GM12878 (cell line): ENCODE measurements at regions of chr9 and their contacts with region 1.

Region 1: DNA sequence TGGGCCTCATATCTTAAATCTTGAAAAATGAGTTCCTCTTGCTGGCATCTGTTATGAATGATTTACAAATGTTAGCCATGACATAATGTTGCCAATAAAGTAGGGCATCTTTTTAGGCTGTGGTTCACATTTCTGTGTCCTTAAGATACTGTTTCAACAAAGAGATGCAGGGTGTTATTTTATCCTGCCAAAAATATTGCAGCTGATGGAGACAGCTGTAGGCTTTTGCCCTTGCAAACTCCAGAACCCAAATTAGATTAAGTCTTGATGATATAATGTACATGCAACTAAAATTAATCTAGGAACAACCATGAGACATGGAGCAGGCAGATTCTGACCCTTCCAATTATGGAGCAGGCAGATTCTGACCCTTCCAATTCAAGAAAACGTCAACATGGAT is 228.2 kb upstream of the GRIN3A start:
- DNase-seq: no peak
- ATAC-seq: no peak
- H3K4me3 ChIP-seq: no peak overlapping the region
- H3K27ac ChIP-seq: no peak overlapping the region
- H3K4me1 ChIP-seq: no peaks in the 10 kb centered on the region
- H3K27me3 ChIP-seq: no peaks in the 10 kb centered on the region
- CTCF ChIP-seq: no peak
- EP300 ChIP-seq: no peak
- POLR2A ChIP-seq: no peak
- RAD21 ChIP-seq: no peak

Region 2: GRCh38 chr9:101951598-101951997 is 15.1 kb before region 1 on chr9:
- CTCF ChIA-PET with region 1: no interaction called
- POLR2A ChIA-PET with region 1: no interaction called
- RAD21 ChIA-PET with region 1: no interaction called
- SMC1A ChIA-PET with region 1: interaction called, 4 read pairs
- in situ Hi-C with region 1: no loop called
- intact Hi-C with region 1: loop called (anchors 1 kb)
- DNase-seq: no peak
- ATAC-seq: no peak
- H3K4me3 ChIP-seq: no peak overlapping the region
- H3K27ac ChIP-seq: no peak overlapping the region
- H3K4me1 ChIP-seq: no peaks in the 10 kb centered on the region
- H3K27me3 ChIP-seq: no peaks in the 10 kb centered on the region
- CTCF ChIP-seq: no peak
- EP300 ChIP-seq: no peak
- POLR2A ChIP-seq: no peak
- RAD21 ChIP-seq: no peak